WTC11 (cell line): ENCODE measurements at regions of chr9 and their contacts with region 1.

Region 1: GRCh38 chr9:21326526-21327139 is 8.6 kb downstream of the KLHL9 start:
- DNase-seq: no peak
- ATAC-seq: peak; percentile 74
- H3K4me3 Mint-ChIP-seq: no peak overlapping the region
- H3K27ac Mint-ChIP-seq: no peak overlapping the region
- H3K4me1 Mint-ChIP-seq: 0 out of 2 replicates have a peak, but pooled peaks cover 2% of the 10 kb centered on the region
- H3K27me3 Mint-ChIP-seq: no peaks in the 10 kb centered on the region
- CTCF ChIP-seq: peak; percentile 14; the same call in 1 of the 2 replicates

Region 2: DNA sequence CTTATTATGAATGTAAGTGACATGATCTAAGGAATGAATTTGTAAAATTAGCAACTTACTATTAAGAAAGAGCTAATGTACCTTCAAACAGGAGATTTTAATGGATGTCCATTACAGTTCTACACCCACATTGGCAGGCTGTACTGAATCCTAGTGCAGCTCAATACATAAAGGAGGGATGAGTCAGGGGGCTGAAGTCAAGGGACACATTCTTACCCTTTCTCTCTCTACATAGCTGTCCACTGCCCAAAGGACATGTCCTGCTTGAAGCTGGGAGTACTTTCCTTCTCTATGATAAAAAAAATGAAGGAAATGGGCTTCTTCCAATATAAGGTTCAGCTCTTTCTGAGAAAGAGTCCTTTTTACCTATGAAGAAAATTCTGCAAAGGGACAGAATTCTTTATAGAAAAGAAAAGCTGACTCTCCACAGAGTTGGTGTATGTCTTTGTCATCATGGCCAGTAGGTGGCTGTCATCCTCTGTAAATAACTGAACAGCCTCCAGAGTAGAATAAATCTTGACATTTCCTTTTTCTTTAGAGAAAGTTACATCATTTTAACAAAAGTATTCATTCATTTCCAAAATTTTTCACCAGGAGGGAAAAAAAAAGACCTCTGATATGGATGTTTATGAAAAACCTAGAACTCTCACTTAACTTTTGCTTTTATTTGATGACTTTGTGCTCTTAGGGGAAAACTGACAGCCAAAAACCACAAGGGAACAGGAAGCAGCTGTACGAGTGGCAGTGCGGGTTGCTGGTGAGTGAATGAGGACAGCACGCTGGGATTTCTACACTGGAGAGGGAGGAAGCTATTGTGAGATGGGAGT is 73.7 kb before region 1 on chr9:
- CTCF ChIA-PET with region 1: interaction called, 19 read pairs
- POLR2A ChIA-PET with region 1: no interaction called
- DNase-seq: peak; percentile 21
- ATAC-seq: peak; percentile 79
- H3K4me3 Mint-ChIP-seq: no peak overlapping the region
- H3K27ac Mint-ChIP-seq: no peak overlapping the region
- H3K4me1 Mint-ChIP-seq: peaks cover 17% of the 10 kb centered on the region
- H3K27me3 Mint-ChIP-seq: peaks cover 34% of the 10 kb centered on the region
- CTCF ChIP-seq: peak; percentile 35

Region 3: GRCh38 chr9:21402386-21403251 is 76.0 kb after region 1 on chr9:
- CTCF ChIA-PET with region 1: interaction called, 15 read pairs
- POLR2A ChIA-PET with region 1: no interaction called
- DNase-seq: peak; percentile 71
- ATAC-seq: peak; percentile 96
- H3K4me3 Mint-ChIP-seq: peak overlapping the region; percentile 81
- H3K27ac Mint-ChIP-seq: no peak overlapping the region
- H3K4me1 Mint-ChIP-seq: peaks cover 5% of the 10 kb centered on the region
- H3K27me3 Mint-ChIP-seq: peaks cover 43% of the 10 kb centered on the region
- CTCF ChIP-seq: no peak

Region 4: DNA sequence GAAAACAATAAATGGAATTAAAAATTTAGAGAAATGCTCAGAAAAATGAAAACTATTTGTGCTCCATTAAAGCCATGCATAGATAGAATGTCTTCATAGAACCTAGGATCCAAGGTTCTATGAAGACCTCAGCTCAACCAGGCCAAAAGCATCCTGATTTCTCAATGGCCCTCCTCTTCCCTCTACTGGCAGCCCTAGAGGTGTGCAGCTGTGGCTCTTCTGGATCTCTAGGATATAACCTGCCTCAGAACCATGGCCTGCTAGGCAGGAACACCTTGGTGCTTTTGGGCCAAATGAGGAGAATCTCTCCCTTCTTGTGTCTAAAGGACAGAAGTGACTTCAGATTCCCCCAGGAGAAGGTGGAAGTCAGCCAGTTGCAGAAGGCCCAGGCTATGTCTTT is 128.7 kb after region 1 on chr9:
- CTCF ChIA-PET with region 1: interaction called, 17 read pairs
- POLR2A ChIA-PET with region 1: interaction called, 5 read pairs
- DNase-seq: peak; percentile 25
- ATAC-seq: peak; percentile 97
- H3K4me3 Mint-ChIP-seq: no peak overlapping the region
- H3K27ac Mint-ChIP-seq: no peak overlapping the region
- H3K4me1 Mint-ChIP-seq: peaks cover 12% of the 10 kb centered on the region
- H3K27me3 Mint-ChIP-seq: peaks cover 5% of the 10 kb centered on the region
- CTCF ChIP-seq: 0 out of 2 replicates have a peak, but pooled peaks have one; percentile 31

Region 5: GRCh38 chr9:21481470-21482056 is 154.9 kb after region 1 on chr9:
- CTCF ChIA-PET with region 1: no interaction called
- POLR2A ChIA-PET with region 1: no interaction called
- DNase-seq: no peak
- ATAC-seq: no peak
- H3K4me3 Mint-ChIP-seq: no peak overlapping the region
- H3K27ac Mint-ChIP-seq: no peak overlapping the region
- H3K4me1 Mint-ChIP-seq: peaks cover 4% of the 10 kb centered on the region
- H3K27me3 Mint-ChIP-seq: no peaks in the 10 kb centered on the region
- CTCF ChIP-seq: no peak